Esophagus muscularis mucosa (tissue), 4 donors: ENCODE measurements at regions of chr1 and their contacts with region 1.

Region 1: DNA sequence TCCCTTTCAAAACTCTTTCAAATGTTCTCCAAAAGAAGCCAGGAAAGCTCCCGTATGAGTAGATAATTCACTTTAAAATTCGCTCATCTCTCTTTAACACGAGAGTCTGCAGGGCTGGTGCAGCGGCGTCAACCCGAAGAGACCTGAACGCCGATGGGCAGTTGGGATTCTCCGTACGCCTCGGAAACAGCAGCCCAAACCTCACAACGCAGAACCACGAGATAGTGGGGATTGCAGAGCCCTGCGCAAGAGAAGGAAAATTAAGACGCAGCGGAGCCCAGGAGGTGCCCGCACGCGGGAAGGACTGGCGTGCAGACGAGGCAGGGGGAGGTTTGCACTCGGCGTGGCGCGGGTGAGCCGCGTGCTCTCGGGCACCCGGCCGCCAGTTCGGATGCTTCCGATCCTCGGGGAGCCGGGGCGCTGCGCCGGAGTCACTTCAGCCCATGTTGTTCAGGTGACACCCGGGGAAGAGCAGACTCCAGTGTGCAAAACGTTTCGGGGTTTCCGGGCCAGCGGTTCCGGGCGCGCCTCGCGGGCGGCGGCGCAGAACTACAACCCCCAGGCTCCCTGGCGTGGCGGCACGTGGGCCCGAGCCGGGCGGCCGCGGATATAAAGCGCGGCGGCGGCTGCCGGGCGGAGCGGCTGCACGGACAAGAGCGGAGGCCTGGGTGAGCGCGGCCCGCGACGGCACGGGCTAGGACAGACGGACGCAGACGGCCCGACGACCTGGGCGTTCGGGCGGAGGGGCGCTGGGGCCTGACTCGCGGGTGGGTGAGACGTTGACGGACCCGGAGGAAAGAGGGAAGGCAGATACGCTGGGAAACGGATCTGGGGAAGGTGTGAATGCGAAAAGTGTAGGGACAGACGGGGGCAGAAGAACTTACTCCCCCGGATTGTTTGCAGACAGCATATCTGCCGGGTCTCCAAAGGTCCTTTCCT is at the start of gene NPL:
- DNase-seq: peak; percentile 95
- H3K4me3 ChIP-seq: peak within 1 kb of the TSS; percentile 65 to 84 (median 72)
- H3K27ac ChIP-seq: peak within 1 kb of the TSS; percentile 73 to 86 (median 82)
- H3K4me1 ChIP-seq: peaks cover 6 to 19% (median 13%) of the 10 kb centered on the region in 4 donors
- H3K27me3 ChIP-seq: no peaks in the 10 kb centered on the region
- CTCF ChIP-seq: peak in 1 of 3 experiments; percentile 13
- EP300 ChIP-seq: no peak
- POLR2A ChIP-seq: peak; percentile 56
- total RNA-seq, gene NPL: 4.6 to 7.2 (median 6.6) TPM

Region 2: DNA sequence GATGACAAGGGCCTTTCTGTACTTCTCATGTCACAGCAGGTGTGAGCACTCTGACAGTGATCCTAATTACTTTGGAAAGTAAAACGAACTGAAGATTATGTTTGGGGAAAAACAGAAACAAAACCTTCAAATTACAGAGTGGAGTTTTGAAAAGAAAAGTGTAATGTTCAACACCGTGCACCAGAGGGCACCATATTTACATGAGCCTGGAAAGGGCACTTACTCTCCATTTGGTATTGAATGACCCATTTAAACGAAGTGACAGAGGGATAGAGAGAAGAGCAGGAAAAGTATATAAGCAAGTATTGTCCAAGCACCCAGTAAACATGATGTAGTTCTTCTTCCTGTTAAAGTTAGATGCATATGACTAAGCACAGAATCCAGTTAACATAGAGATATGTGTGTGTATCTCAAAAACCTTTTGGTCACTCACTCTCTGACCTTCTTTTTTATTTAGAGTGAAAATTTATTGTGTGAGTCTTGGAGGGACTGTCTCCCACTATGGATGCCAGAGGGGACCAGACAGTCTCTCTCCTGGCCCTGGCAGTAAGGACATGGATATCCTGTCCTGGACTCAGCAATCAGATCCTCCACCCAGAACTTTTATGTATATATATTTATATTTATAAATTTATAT is 343.3 kb before region 1 on chr1:
- intact Hi-C with region 1: loop called (anchors 10 kb)
- DNase-seq: no peak
- H3K4me3 ChIP-seq: no peak overlapping the region
- H3K27ac ChIP-seq: no peak overlapping the region
- H3K4me1 ChIP-seq: no peaks in the 10 kb centered on the region
- H3K27me3 ChIP-seq: peaks cover 0 to 4% (median 0%) of the 10 kb centered on the region in 4 donors
- CTCF ChIP-seq: peak; percentile 40 to 65 (median 53)
- EP300 ChIP-seq: no peak
- POLR2A ChIP-seq: no peak